ENCODE measurements at regions of chr20 and their contacts with region 1.

Region 1: GRCh38 chr20:25418776-25419175 is 11.3 kb downstream of the GINS1 start:
- DNase-seq: no peak

Region 2: DNA sequence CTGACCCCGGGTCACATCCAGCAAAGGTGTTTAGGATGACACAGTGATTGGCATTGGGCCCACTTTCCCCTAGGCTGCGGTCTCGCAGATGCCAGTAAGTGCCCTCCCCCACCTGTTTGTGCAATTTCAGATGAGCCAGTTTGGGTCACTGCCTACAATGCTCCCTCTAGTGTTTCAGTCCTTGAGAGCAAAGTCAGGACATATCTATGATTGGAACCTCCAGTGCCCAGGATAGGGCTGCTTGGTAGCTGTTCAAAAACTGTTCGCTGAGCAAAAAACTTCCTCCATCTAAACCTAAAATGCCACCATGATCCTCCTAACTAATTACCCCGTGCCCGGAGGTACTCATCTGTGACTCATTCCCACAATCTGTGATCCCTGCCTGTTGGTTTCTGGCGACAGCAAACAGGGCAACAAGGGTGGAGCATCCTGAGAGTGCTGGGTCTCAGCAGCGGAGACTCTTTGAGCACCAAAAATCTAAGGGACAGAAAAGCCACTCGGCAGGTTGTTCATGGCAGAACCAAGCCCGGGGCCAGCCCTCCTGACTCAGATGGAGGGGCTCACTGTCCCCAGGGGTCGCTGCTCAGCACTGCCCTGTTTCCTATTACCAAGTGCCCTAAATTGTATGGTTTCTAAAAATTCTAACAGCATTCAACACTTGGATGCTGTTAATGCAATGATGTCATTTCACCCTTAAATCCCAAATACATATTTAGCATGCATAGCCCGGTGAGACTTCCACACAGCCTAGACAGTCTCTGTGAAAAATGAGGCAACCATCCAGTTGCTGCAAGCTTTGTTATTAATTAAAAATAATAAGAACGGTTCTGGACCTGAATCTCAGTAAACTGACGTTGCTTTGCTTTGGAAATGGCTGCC is 341.8 kb before region 1 on chr20:
- intact Hi-C with region 1: loop called in 1 of 2 experiments (anchors 10 kb)
- DNase-seq: peak; percentile 56

Measured in posterior vena cava (tissue), 2 donors.